ENCODE measurements at regions of chr4 and their contacts with region 1.

Region 1: GRCh38 chr4:18021722-18022571 is at the start of gene LCORL:
- DNase-seq: peak; percentile 97
- H3K4me3 ChIP-seq: peak within 1 kb of the TSS; percentile 86
- H3K27ac ChIP-seq: peak within 1 kb of the TSS; percentile 85
- H3K4me1 ChIP-seq: peaks cover 6% of the 10 kb centered on the region
- H3K27me3 ChIP-seq: peaks cover 1 to 5% of the 10 kb centered on the region in 2 experiments
- CTCF ChIP-seq: no peak
- POLR2A ChIP-seq: no peak
- total RNA-seq, gene LCORL: 17.9 and 23.9 TPM in 2 replicates

Region 2: DNA sequence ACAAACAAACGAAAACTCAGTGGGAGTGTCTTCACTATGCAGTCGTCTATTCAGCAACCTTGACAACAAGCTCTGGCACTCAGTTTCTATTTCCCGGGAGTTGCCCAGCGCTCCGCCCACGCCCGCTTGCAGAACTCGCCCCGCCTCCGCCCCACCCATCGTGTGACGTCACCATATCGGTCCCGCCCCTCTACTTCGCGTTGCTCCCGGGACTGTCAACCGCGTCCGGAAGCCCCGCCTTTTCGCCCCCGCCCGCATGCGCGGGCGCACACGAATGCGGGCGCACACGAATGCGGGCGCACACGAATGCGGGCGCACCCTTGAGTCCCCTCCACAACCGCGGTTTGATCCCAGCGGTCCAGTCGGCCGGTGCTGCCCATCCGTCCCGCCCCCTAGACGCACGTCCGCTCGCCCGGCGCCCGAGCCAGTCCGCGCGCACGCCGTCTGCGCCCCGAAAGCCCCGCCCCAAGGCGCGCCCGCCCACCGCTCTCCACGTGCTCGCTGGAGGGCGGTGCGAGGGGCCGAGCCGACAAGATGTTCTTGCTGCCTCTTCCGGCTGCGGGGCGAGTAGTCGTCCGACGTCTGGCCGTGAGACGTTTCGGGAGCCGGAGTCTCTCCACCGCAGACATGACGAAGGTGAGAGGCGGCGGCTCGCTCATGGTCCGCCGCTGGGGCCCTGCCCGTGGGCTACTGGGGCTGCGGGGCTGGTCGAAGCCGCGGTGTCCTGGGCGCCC is 444.8 kb before region 1 on chr4 and contains the start of gene LAP3:
- CTCF ChIA-PET with region 1: no interaction called
- POLR2A ChIA-PET with region 1: no interaction called
- dilution Hi-C with region 1: no loop called
- intact Hi-C with region 1: loop called (anchors 1 kb)
- DNase-seq: peak; percentile 97
- H3K4me3 ChIP-seq: peak within 1 kb of the TSS; percentile 61 to 96 (median 90)
- H3K27ac ChIP-seq: peak within 1 kb of the TSS; percentile 82
- H3K4me1 ChIP-seq: peaks cover 36% of the 10 kb centered on the region
- H3K27me3 ChIP-seq: no peaks in the 10 kb centered on the region
- CTCF ChIP-seq: no peak
- POLR2A ChIP-seq: peak; percentile 94
- total RNA-seq, gene LAP3: 73.7 and 94.8 TPM in 2 replicates

Region 3: GRCh38 chr4:17810260-17811077 is 211.5 kb before region 1 on chr4 and contains the starts of genes DCAF16 and NCAPG:
- CTCF ChIA-PET with region 1: no interaction called
- POLR2A ChIA-PET with region 1: no interaction called
- dilution Hi-C with region 1: no loop called
- intact Hi-C with region 1: loop called (anchors 1 kb)
- DNase-seq: peak; percentile 100
- H3K4me3 ChIP-seq: peak within 1 kb of the TSS; percentile 74 to 97 (median 86)
- H3K27ac ChIP-seq: peak within 1 kb of the TSS; percentile 68
- H3K4me1 ChIP-seq: peaks cover 45% of the 10 kb centered on the region
- H3K27me3 ChIP-seq: no peaks in the 10 kb centered on the region
- CTCF ChIP-seq: no peak
- POLR2A ChIP-seq: peak; percentile 94
- total RNA-seq, gene DCAF16: 29.0 and 35.0 TPM in 2 replicates
- total RNA-seq, gene NCAPG: 63.4 and 66.4 TPM in 2 replicates

Region 4: GRCh38 chr4:18075823-18076433 is 54.0 kb after region 1 on chr4:
- CTCF ChIA-PET with region 1: no interaction called
- POLR2A ChIA-PET with region 1: no interaction called
- dilution Hi-C with region 1: no loop called
- intact Hi-C with region 1: loop called (anchors 2 kb)
- DNase-seq: peak; percentile 47
- H3K4me3 ChIP-seq: no peak overlapping the region
- H3K27ac ChIP-seq: no peak overlapping the region
- H3K4me1 ChIP-seq: peaks cover 13% of the 10 kb centered on the region
- H3K27me3 ChIP-seq: peaks cover 4 to 8% of the 10 kb centered on the region in 2 experiments
- CTCF ChIP-seq: peak; percentile 60 to 62
- POLR2A ChIP-seq: no peak

Region 5: GRCh38 chr4:18318682-18319388 is 296.9 kb after region 1 on chr4:
- CTCF ChIA-PET with region 1: no interaction called
- POLR2A ChIA-PET with region 1: no interaction called
- dilution Hi-C with region 1: no loop called
- intact Hi-C with region 1: loop called (anchors 2 kb)
- DNase-seq: peak; percentile 91
- H3K4me3 ChIP-seq: peak overlapping the region in 2 of 3 experiments; percentile 2 to 25
- H3K27ac ChIP-seq: peak overlapping the region; percentile 16
- H3K4me1 ChIP-seq: peaks cover 9% of the 10 kb centered on the region
- H3K27me3 ChIP-seq: no peaks in the 10 kb centered on the region
- CTCF ChIP-seq: no peak
- POLR2A ChIP-seq: no peak

Region 6: GRCh38 chr4:18536428-18536827 is 514.5 kb after region 1 on chr4:
- CTCF ChIA-PET with region 1: interaction called, 4 read pairs
- POLR2A ChIA-PET with region 1: no interaction called
- dilution Hi-C with region 1: no loop called
- intact Hi-C with region 1: loop called (anchors 1 kb)
- DNase-seq: peak; percentile 32
- H3K4me3 ChIP-seq: no peak overlapping the region
- H3K27ac ChIP-seq: no peak overlapping the region
- H3K4me1 ChIP-seq: peaks cover 45% of the 10 kb centered on the region
- H3K27me3 ChIP-seq: no peaks in the 10 kb centered on the region
- CTCF ChIP-seq: peak; percentile 16 to 37
- POLR2A ChIP-seq: no peak

Region 7: DNA sequence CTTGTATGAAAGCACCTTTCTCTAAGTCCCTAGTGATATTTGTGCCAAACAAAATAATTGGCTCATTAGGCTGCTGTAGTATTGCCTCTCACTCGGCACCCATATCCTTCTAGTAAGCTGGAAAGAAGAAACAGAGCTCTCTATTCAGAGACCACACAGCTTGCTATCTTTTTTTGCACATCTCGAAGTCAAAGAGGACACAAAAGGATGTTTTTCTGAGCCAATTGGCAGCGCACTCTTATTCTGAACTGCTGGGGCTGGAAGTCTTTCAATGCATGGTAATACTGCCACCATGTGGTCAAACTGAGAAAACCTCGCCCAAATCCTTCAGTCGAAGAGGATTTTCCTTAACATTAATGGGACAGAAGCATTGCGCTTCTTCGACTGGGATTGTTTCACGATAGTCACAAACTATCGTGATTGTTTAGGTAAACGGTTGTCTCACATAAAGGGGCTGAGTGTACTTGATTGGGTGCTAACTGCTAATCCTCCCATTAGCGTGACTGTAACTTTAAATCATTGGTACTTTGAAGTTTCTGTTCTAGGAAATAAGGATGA is 571.6 kb after region 1 on chr4:
- CTCF ChIA-PET with region 1: no interaction called
- POLR2A ChIA-PET with region 1: no interaction called
- dilution Hi-C with region 1: no loop called
- intact Hi-C with region 1: loop called (anchors 1 kb)
- DNase-seq: peak; percentile 80
- H3K4me3 ChIP-seq: no peak overlapping the region
- H3K27ac ChIP-seq: no peak overlapping the region
- H3K4me1 ChIP-seq: no peaks in the 10 kb centered on the region
- H3K27me3 ChIP-seq: no peaks in the 10 kb centered on the region
- CTCF ChIP-seq: peak; percentile 70 to 73
- POLR2A ChIP-seq: no peak